ENCODE measurements at regions of chr9 and their contacts with region 1.

Region 1: DNA sequence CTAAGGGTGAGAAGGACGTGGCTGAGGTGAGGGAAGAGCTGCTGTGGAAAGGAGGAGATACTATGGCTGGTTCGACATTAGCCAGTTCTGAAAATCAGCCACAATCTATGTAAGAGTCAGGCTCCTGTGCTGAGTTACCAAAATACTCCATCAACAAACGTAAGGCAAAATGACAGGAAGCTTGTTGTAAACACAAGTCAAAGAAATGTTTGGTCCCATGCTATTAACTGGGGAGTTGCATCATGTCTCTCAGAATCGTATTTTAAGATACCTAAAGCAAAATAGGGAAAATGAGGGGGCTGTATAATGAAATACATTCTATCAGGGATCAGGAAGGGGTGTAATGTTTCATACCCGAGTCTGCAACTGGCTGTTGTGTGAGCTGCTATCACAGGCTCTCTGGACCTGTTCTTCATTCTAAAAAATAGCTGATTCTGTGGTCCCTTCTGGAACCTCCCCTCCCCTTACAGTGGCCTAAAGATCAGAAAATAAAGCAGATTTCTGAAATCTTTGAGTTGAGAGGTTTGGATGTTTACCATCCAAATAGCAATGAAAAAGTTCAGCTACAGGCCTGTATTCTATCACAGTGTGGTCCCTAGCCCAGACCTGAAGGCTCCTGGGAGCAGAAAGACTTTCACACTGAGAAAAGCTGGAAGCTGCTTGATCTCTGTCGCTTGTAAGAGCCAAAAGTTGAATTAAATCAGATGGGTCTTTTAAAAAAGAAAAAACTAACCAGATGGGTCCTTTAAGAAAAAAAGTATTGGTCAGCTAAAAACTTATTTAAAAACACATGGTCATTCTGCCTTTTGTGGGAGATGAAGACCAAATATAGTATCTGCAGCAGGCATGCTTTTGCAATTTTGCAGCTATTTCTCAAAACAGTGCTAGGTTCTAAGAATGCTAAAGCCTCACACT is 97.8 kb upstream of the SMC5 start:
- DNase-seq: no peak
- H3K4me3 ChIP-seq: no peak overlapping the region
- H3K4me3 Mint-ChIP-seq: no peak overlapping the region
- H3K27ac ChIP-seq: no peak overlapping the region
- H3K27ac Mint-ChIP-seq: no peak overlapping the region
- H3K4me1 ChIP-seq: no peaks in the 10 kb centered on the region
- H3K4me1 Mint-ChIP-seq: no peaks in the 10 kb centered on the region
- H3K27me3 ChIP-seq: no peaks in the 10 kb centered on the region
- H3K27me3 Mint-ChIP-seq: no peaks in the 10 kb centered on the region
- CTCF ChIP-seq: no peak

Region 2: GRCh38 chr9:70229579-70229978 is 68.6 kb after region 1 on chr9:
- intact Hi-C with region 1: loop called in 1 of 2 experiments (anchors 10 kb)
- DNase-seq: no peak
- H3K4me3 ChIP-seq: no peak overlapping the region
- H3K4me3 Mint-ChIP-seq: no peak overlapping the region
- H3K27ac ChIP-seq: no peak overlapping the region
- H3K27ac Mint-ChIP-seq: peak overlapping the region in 1 of 7 donors; percentile 62
- H3K4me1 ChIP-seq: no peaks in the 10 kb centered on the region
- H3K4me1 Mint-ChIP-seq: no peaks in the 10 kb centered on the region
- H3K27me3 ChIP-seq: no peaks in the 10 kb centered on the region
- H3K27me3 Mint-ChIP-seq: peaks cover 0 to 2% (median 0%) of the 10 kb centered on the region in 3 donors
- CTCF ChIP-seq: no peak

Measured in CD14-positive monocyte (primary cell).